ENCODE measurements at regions of chr6 and their contacts with region 1.

Region 1: GRCh38 chr6:73285674-73286283 is 22.8 kb upstream of the KHDC1 start:
- DNase-seq: peak; percentile 76
- ATAC-seq: peak; percentile 83
- H3K4me3 ChIP-seq: no peak overlapping the region
- H3K27ac ChIP-seq: no peak overlapping the region
- H3K4me1 ChIP-seq: peaks cover 2% of the 10 kb centered on the region
- H3K27me3 ChIP-seq: no peaks in the 10 kb centered on the region
- CTCF ChIP-seq: peak; percentile 66
- POLR2A ChIP-seq: no peak
- RAD21 ChIP-seq: peak; percentile 60

Region 2: GRCh38 chr6:72636215-72636614 is 649.6 kb before region 1 on chr6:
- CTCF ChIA-PET with region 1: no interaction called
- POLR2A ChIA-PET with region 1: no interaction called
- dilution Hi-C with region 1: no loop called
- in situ Hi-C with region 1: no loop called
- intact Hi-C with region 1: no loop called
- DNase-seq: no peak
- ATAC-seq: no peak
- H3K4me3 ChIP-seq: no peak overlapping the region
- H3K27ac ChIP-seq: no peak overlapping the region
- H3K4me1 ChIP-seq: no peaks in the 10 kb centered on the region
- H3K27me3 ChIP-seq: no peaks in the 10 kb centered on the region
- CTCF ChIP-seq: no peak
- POLR2A ChIP-seq: no peak
- RAD21 ChIP-seq: no peak

Region 3: DNA sequence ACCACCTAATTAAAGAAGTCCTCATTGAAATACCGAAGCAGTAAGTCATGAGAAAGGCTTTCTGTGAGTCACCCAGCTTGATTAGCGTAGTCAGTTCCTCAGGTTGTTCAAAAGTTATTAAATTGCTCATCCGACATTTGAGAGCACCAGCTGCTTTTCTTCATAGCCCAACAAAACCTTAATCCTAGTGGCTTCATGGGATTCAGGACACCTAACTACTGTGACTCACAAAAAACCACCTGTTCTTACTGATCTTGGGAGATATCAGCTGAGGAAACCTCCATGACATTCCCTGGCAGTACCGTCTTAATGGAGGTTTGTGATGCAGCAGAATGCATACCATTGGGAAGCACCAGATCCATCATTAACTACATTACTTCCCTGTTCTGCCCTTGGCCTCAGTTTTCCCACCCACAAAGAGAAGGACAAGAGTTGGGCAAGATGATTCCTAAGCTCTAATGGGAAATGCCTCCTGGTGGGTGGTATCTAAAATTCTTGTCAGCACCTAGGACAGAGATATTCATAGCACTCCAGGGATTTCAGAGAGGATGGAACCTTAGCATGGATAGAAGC is 164.3 kb before region 1 on chr6:
- CTCF ChIA-PET with region 1: no interaction called
- POLR2A ChIA-PET with region 1: no interaction called
- dilution Hi-C with region 1: no loop called
- in situ Hi-C with region 1: no loop called
- intact Hi-C with region 1: no loop called
- DNase-seq: peak; percentile 60
- ATAC-seq: peak; percentile 85
- H3K4me3 ChIP-seq: no peak overlapping the region
- H3K27ac ChIP-seq: no peak overlapping the region
- H3K4me1 ChIP-seq: peaks cover 2% of the 10 kb centered on the region; the same call in 1 of the 2 replicates
- H3K27me3 ChIP-seq: no peaks in the 10 kb centered on the region
- CTCF ChIP-seq: peak; percentile 42
- POLR2A ChIP-seq: no peak
- RAD21 ChIP-seq: peak; percentile 24; the same call in 1 of the 2 replicates

Region 4: GRCh38 chr6:73309769-73310502 is 24.2 kb after region 1 on chr6:
- CTCF ChIA-PET with region 1: interaction called, 6 read pairs
- POLR2A ChIA-PET with region 1: interaction called, 3 read pairs
- dilution Hi-C with region 1: no loop called
- in situ Hi-C with region 1: no loop called
- intact Hi-C with region 1: loop called (anchors 1 kb)
- DNase-seq: peak; percentile 52
- ATAC-seq: peak; percentile 95
- H3K4me3 ChIP-seq: peak overlapping the region; percentile 61
- H3K27ac ChIP-seq: peak overlapping the region; percentile 56
- H3K4me1 ChIP-seq: peaks cover 6% of the 10 kb centered on the region
- H3K27me3 ChIP-seq: peaks cover 4% of the 10 kb centered on the region; the same call in 1 of the 2 replicates
- CTCF ChIP-seq: peak; percentile 51
- POLR2A ChIP-seq: peak; percentile 62
- RAD21 ChIP-seq: peak; percentile 30; the same call in 1 of the 2 replicates

Region 5: GRCh38 chr6:73329201-73329600 is 43.4 kb after region 1 on chr6:
- CTCF ChIA-PET with region 1: interaction called, 7 read pairs
- POLR2A ChIA-PET with region 1: no interaction called
- dilution Hi-C with region 1: no loop called
- in situ Hi-C with region 1: no loop called
- intact Hi-C with region 1: loop called (anchors 1 kb)
- DNase-seq: no peak
- ATAC-seq: no peak
- H3K4me3 ChIP-seq: no peak overlapping the region
- H3K27ac ChIP-seq: no peak overlapping the region
- H3K4me1 ChIP-seq: no peaks in the 10 kb centered on the region
- H3K27me3 ChIP-seq: peaks cover 9% of the 10 kb centered on the region
- CTCF ChIP-seq: no peak
- POLR2A ChIP-seq: no peak
- RAD21 ChIP-seq: no peak

Region 6: GRCh38 chr6:73388800-73389512 is 103.2 kb after region 1 on chr6:
- CTCF ChIA-PET with region 1: interaction called, 4 read pairs
- POLR2A ChIA-PET with region 1: no interaction called
- dilution Hi-C with region 1: no loop called
- in situ Hi-C with region 1: no loop called
- intact Hi-C with region 1: loop called (anchors 2 kb)
- DNase-seq: peak; percentile 51
- ATAC-seq: peak; percentile 92
- H3K4me3 ChIP-seq: peak overlapping the region; percentile 45
- H3K27ac ChIP-seq: peak overlapping the region; percentile 30; the same call in 1 of the 2 replicates
- H3K4me1 ChIP-seq: no peaks in the 10 kb centered on the region
- H3K27me3 ChIP-seq: no peaks in the 10 kb centered on the region
- CTCF ChIP-seq: peak; percentile 69
- POLR2A ChIP-seq: no peak
- RAD21 ChIP-seq: peak; percentile 67

Region 7: GRCh38 chr6:73610444-73611275 is 324.9 kb after region 1 on chr6:
- CTCF ChIA-PET with region 1: no interaction called
- POLR2A ChIA-PET with region 1: no interaction called
- dilution Hi-C with region 1: no loop called
- in situ Hi-C with region 1: loop called (anchors 25 kb)
- intact Hi-C with region 1: no loop called
- DNase-seq: peak; percentile 66
- ATAC-seq: peak; percentile 91
- H3K4me3 ChIP-seq: no peak overlapping the region
- H3K27ac ChIP-seq: peak overlapping the region; percentile 25; the same call in 1 of the 2 replicates
- H3K4me1 ChIP-seq: no peaks in the 10 kb centered on the region; the same call in 1 of the 2 replicates
- H3K27me3 ChIP-seq: no peaks in the 10 kb centered on the region
- CTCF ChIP-seq: peak; percentile 75
- POLR2A ChIP-seq: no peak
- RAD21 ChIP-seq: peak; percentile 71